Activated T-helper 2 cell treated with anti-CD3 and anti-CD28 coated beads, Interferon-gamma antibody, Interleukin-2, Interleukin-4, amounts not matched to agents 10 μg/mL and 5 μg/mL and 100 μg/mL, durations not matched to agents 14 hours and 24 hours and 36 hours (primary cell): ENCODE measurements at regions of chr3 and their contacts with region 1.

Region 1: GRCh38 chr3:186826976-186827731 is 15.4 kb upstream of the ADIPOQ start:
- DNase-seq: peak; percentile 84
- H3K4me3 Mint-ChIP-seq: peak overlapping the region; percentile 91
- H3K27ac Mint-ChIP-seq: peak overlapping the region; percentile 65
- H3K4me1 Mint-ChIP-seq: peaks cover 21% of the 10 kb centered on the region
- H3K27me3 Mint-ChIP-seq: peaks cover 39% of the 10 kb centered on the region

Region 2: GRCh38 chr3:185983495-185984141 is 843.5 kb before region 1 on chr3:
- intact Hi-C with region 1: loop called (anchors 10 kb)
- DNase-seq: peak; percentile 16
- H3K4me3 Mint-ChIP-seq: no peak overlapping the region
- H3K27ac Mint-ChIP-seq: no peak overlapping the region
- H3K4me1 Mint-ChIP-seq: no peaks in the 10 kb centered on the region
- H3K27me3 Mint-ChIP-seq: peaks cover 42% of the 10 kb centered on the region

Region 3: DNA sequence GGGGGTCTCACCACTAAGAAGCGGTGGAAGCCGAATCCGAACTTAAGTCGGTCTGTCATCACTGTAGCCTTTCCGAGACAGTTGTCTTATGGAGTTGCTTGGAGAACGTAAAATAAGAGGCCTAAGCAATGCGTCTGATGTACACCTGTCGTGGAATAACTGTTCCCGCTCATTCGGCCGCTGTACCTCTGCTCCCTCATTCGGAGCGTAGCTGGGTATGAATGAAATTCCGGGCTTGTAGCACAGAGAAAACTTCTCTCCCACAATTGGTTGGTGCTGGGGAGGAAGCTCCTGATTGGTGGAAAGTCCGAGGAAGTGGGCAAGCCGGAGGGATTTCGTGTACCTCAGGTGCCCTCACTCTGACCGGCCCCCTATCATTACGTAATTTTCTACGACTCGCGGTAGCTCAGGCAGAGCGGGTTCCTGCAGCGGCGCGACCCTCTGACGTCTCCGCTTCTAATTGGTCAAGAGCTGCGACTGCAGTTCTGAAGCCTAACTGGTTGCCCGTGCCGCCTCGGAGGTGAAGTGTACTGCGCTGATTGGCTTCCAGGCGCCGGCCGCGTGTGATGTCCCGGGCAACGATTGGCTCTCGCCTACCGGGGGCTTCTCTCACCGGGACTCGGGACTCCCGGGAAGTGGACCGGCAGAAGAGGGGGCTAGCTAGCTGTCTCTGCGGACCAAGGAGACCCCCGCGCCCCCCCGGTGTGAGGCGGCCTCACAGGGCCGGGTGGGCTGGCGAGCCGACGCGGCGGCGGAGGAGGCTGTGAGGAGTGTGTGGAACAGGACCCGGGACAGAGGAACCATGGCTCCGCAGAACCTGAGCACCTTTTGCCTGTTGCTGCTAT is 256.8 kb before region 1 on chr3 and contains the start of gene DNAJB11:
- intact Hi-C with region 1: loop called (anchors 5 kb)
- DNase-seq: peak; percentile 98
- H3K4me3 Mint-ChIP-seq: peak within 1 kb of the TSS; percentile 89
- H3K27ac Mint-ChIP-seq: peak within 1 kb of the TSS; percentile 98
- H3K4me1 Mint-ChIP-seq: peaks cover 42% of the 10 kb centered on the region
- H3K27me3 Mint-ChIP-seq: no peaks in the 10 kb centered on the region
- total RNA-seq, gene DNAJB11: 66.3 and 72.8 TPM in 2 replicates

Region 4: GRCh38 chr3:186806089-186807055 is 20.8 kb before region 1 on chr3 and contains the start of gene RFC4:
- intact Hi-C with region 1: loop called (anchors 2 kb)
- DNase-seq: peak; percentile 79
- H3K4me3 Mint-ChIP-seq: peak within 1 kb of the TSS; percentile 90
- H3K27ac Mint-ChIP-seq: peak within 1 kb of the TSS; percentile 85
- H3K4me1 Mint-ChIP-seq: peaks cover 23% of the 10 kb centered on the region
- H3K27me3 Mint-ChIP-seq: no peaks in the 10 kb centered on the region
- total RNA-seq, gene RFC4: 97.2 and 105 TPM in 2 replicates

Region 5: DNA sequence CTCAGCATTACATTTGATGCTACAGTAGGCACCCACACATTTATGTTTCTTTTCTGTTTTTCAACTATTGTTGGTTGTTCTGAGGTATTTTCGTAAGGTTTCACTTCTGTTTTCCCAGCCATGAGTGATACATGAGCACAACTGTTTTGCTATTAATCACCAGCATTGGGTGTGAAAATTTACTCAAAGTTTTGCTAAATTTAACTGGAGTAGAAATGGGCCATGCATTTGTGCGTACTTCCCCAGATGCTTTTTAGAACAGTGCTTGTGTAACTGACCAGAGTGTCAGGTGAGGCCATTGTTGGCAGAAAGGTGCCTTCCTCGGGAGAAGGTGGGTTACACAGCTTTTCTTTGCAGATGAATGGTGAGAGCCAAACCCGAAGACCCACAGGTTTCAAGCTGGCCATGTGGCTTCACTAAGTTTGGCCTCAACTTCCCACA is 173.6 kb after region 1 on chr3:
- intact Hi-C with region 1: loop called (anchors 2 kb)
- DNase-seq: no peak
- H3K4me3 Mint-ChIP-seq: peak overlapping the region; percentile 10
- H3K27ac Mint-ChIP-seq: peak overlapping the region; percentile 73
- H3K4me1 Mint-ChIP-seq: peaks cover 66% of the 10 kb centered on the region
- H3K27me3 Mint-ChIP-seq: no peaks in the 10 kb centered on the region